ENCODE measurements at regions of chr2 and their contacts with region 1.

Region 1: DNA sequence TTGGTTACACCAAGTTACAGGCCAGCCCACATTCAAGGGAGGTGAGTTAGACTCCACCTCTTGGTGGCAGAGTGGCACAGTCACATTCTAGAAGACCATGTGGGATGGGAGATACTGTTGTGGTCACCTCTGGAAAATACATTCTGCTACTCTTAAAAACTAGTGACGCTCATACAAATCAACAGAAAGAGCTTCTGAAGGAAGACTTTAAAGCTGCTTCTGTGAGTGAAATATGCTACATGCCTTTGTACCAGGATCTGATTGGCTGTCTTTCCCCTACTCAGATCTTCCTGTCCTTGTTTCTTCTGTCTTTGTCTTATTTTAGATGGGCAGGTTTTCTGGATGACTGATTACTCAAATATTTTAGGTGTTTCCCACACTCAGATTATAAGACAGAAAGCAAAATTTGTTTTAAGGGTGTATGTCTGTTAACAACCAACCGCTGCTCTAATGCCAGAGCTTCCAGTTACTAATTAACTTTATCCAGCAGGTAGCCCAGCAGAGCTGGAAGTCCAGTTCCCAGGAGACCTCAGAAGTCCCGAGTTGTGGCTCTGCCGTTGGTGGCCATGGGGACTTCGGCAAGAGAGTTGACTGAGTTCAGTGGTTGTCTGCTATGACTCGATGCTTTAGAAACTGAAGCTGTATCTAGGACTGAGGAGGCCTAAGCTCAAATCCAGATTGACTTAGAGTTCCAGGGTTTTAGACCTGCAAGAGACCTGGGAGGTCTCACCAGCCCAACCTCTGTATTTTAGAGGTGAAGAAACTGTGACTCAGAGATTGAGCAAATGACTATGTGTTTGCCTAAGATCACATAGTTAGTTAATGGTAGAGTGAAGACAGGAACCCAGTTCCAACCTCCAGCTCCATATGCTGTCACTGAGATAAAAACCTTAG is 7.4 kb downstream of the IL1R2 start:
- DNase-seq: peak; percentile 71
- H3K4me3 Mint-ChIP-seq: peak overlapping the region; percentile 66
- H3K27ac Mint-ChIP-seq: peak overlapping the region; percentile 93
- H3K4me1 Mint-ChIP-seq: peaks cover 36% of the 10 kb centered on the region
- H3K27me3 Mint-ChIP-seq: peaks cover 14% of the 10 kb centered on the region

Region 2: GRCh38 chr2:101717071-101717845 is 281.9 kb before region 1 on chr2:
- CTCF ChIA-PET with region 1: no interaction called
- POLR2A ChIA-PET with region 1: no interaction called
- intact Hi-C with region 1: loop called (anchors 2 kb)
- DNase-seq: peak; percentile 75
- H3K4me3 Mint-ChIP-seq: peak overlapping the region; percentile 27
- H3K27ac Mint-ChIP-seq: peak overlapping the region; percentile 88
- H3K4me1 Mint-ChIP-seq: peaks cover 85% of the 10 kb centered on the region
- H3K27me3 Mint-ChIP-seq: no peaks in the 10 kb centered on the region

Region 3: GRCh38 chr2:101900375-101900774 is 98.8 kb before region 1 on chr2:
- CTCF ChIA-PET with region 1: interaction called, 14 read pairs
- POLR2A ChIA-PET with region 1: interaction called, 5 read pairs
- intact Hi-C with region 1: loop called (anchors 1 kb)
- DNase-seq: peak; percentile 88
- H3K4me3 Mint-ChIP-seq: peak overlapping the region; percentile 56
- H3K27ac Mint-ChIP-seq: peak overlapping the region; percentile 93
- H3K4me1 Mint-ChIP-seq: peaks cover 40% of the 10 kb centered on the region
- H3K27me3 Mint-ChIP-seq: peaks cover 15% of the 10 kb centered on the region

Region 4: GRCh38 chr2:102063941-102064678 is 65.0 kb after region 1 on chr2:
- CTCF ChIA-PET with region 1: interaction called, 12 read pairs
- POLR2A ChIA-PET with region 1: interaction called, 13 read pairs
- intact Hi-C with region 1: loop called (anchors 1 kb)
- DNase-seq: peak; percentile 81
- H3K4me3 Mint-ChIP-seq: no peak overlapping the region
- H3K27ac Mint-ChIP-seq: peak overlapping the region; percentile 88
- H3K4me1 Mint-ChIP-seq: peaks cover 44% of the 10 kb centered on the region
- H3K27me3 Mint-ChIP-seq: peaks cover 6% of the 10 kb centered on the region

Region 5: GRCh38 chr2:102147935-102148334 is 148.8 kb after region 1 on chr2:
- CTCF ChIA-PET with region 1: interaction called, 4 read pairs
- POLR2A ChIA-PET with region 1: interaction called, 6 read pairs
- intact Hi-C with region 1: loop called (anchors 1 kb)
- DNase-seq: peak; percentile 82
- H3K4me3 Mint-ChIP-seq: peak overlapping the region; percentile 3
- H3K27ac Mint-ChIP-seq: peak overlapping the region; percentile 79
- H3K4me1 Mint-ChIP-seq: peaks cover 31% of the 10 kb centered on the region
- H3K27me3 Mint-ChIP-seq: peaks cover 11% of the 10 kb centered on the region

Region 6: DNA sequence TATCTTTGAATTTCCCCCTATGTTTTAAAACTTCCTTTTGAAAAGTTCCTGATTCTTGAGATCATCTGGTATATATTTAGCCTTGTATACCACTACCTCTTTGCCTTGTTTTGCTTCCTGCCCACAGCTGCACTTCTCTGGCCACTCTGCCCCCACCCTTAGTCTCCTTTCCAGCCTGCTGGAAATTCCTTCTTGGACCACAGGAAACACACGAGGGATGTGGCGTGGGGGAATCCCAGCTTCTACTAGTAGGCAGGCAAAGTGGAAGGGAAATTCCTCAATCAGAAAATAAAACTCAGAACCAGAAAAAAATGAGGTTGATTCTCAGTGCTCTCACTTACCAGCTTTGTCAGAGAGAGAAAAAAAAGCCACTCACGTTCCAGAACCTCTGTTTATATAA is 437.2 kb after region 1 on chr2:
- CTCF ChIA-PET with region 1: no interaction called
- POLR2A ChIA-PET with region 1: no interaction called
- intact Hi-C with region 1: loop called (anchors 2 kb)
- DNase-seq: peak; percentile 54
- H3K4me3 Mint-ChIP-seq: no peak overlapping the region
- H3K27ac Mint-ChIP-seq: peak overlapping the region; percentile 34
- H3K4me1 Mint-ChIP-seq: peaks cover 30% of the 10 kb centered on the region
- H3K27me3 Mint-ChIP-seq: no peaks in the 10 kb centered on the region

Measured in activated CD4-positive, alpha-beta memory T cell treated with anti-CD3 and anti-CD28 coated beads for 36 hours (primary cell).